OCI-LY7 (cell line): ENCODE measurements at regions of chr16 and their contacts with region 1.

Region 1: DNA sequence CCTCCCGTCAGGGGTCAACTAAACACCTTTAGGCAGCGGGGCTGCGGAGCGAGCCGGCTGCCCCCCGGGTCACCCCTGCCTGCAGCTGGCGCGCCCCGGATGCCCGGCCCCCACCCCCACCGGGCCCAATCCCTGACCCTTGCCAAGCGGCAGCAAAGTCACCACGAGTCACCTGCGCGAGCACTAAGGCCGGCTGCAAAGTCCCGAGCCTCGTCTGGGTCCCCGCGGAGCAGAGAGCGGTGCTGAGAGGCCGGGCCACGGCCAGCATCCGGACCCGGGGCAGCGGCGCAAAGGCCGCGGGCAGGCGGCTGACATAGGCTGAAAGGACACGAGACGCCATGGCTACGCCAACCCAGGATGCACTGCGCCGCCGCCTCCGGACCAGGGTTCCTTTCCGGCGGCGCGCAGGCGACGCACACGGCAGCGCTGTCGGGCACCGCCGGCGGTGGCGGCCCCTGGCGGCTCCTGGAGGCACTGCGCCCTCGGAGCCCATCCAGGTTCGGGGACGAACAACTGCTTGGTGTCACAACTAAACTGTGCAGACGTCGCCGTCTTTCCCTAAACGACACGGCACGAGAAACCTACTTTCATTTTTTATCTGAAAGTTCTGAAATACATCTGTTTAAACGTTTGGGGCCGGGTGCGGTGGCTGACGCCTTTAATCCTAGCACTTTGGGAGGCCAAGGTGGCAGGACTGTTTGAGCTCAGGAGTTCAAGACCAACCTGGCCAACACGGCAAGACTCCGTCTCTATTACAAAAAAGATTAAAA is at the start of gene NDUFAB1:
- DNase-seq: peak; percentile 93
- H3K4me3 ChIP-seq: peak within 1 kb of the TSS; percentile 96
- H3K27ac ChIP-seq: peak within 1 kb of the TSS; percentile 57
- H3K4me1 ChIP-seq: peaks cover 21% of the 10 kb centered on the region
- CTCF ChIP-seq: peak; percentile 82
- total RNA-seq, gene NDUFAB1: 111 and 159 TPM in 2 replicates

Region 2: DNA sequence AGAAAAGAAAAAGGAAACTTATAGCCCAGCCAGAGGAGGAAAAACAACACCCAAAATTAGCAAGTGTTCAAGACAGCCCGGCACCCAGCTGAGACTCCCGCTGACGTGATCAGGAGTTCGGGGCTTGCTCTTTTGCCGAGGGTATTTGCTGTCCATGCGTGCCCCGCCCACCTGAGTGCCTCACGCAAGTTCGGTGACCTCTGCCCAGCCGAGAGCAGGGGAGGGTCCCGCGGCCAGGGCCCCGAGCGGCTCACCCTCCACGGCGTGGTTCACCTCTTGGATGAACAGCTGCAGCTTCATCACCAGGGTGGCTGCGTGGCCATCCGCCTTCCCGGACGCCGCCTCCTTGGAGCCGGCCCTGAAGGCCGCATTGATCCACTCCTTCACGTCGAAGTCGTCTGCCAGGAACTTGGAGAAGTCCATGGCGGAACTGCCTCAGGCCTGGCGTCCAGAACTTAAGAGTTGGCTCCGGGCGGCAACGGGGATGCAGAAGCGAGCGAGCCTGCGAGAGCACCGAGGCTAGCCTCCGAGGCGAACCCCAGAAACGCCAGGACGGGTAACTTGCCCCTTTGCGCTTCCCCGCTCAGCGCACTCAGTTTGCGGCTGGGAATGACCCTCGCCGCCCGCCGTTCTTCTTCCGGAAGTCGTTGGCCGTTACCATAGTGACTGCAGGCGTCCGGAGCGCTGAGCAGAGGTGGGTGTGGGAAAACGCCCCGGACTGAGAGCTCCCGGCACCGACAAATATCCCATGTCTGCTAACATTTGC is 143.4 kb before region 1 on chr16 and contains the start of gene COG7:
- CTCF ChIA-PET with region 1: no interaction called
- POLR2A ChIA-PET with region 1: no interaction called
- intact Hi-C with region 1: loop called (anchors 5 kb)
- DNase-seq: peak; percentile 85
- H3K4me3 ChIP-seq: peak within 1 kb of the TSS; percentile 72
- H3K27ac ChIP-seq: peak within 1 kb of the TSS; percentile 11
- H3K4me1 ChIP-seq: peaks cover 13% of the 10 kb centered on the region
- CTCF ChIP-seq: no peak
- total RNA-seq, gene COG7: 11.1 and 11.4 TPM in 2 replicates

Region 3: GRCh38 chr16:23504451-23505179 is 91.5 kb before region 1 on chr16:
- CTCF ChIA-PET with region 1: no interaction called
- POLR2A ChIA-PET with region 1: interaction called, 4 read pairs
- intact Hi-C with region 1: loop called (anchors 2 kb)
- DNase-seq: peak; percentile 34
- H3K4me3 ChIP-seq: peak overlapping the region; percentile 99
- H3K27ac ChIP-seq: peak overlapping the region; percentile 91
- H3K4me1 ChIP-seq: peaks cover 77% of the 10 kb centered on the region
- CTCF ChIP-seq: peak; percentile 34; the same call in 1 of the 2 replicates

Region 4: GRCh38 chr16:23570992-23571632 is 25.0 kb before region 1 on chr16:
- CTCF ChIA-PET with region 1: no interaction called
- POLR2A ChIA-PET with region 1: interaction called, 7 read pairs
- intact Hi-C with region 1: loop called (anchors 1 kb)
- DNase-seq: peak; percentile 82
- H3K4me3 ChIP-seq: peak overlapping the region; percentile 44
- H3K27ac ChIP-seq: peak overlapping the region; percentile 79
- H3K4me1 ChIP-seq: peaks cover 36% of the 10 kb centered on the region
- CTCF ChIP-seq: no peak

Region 5: DNA sequence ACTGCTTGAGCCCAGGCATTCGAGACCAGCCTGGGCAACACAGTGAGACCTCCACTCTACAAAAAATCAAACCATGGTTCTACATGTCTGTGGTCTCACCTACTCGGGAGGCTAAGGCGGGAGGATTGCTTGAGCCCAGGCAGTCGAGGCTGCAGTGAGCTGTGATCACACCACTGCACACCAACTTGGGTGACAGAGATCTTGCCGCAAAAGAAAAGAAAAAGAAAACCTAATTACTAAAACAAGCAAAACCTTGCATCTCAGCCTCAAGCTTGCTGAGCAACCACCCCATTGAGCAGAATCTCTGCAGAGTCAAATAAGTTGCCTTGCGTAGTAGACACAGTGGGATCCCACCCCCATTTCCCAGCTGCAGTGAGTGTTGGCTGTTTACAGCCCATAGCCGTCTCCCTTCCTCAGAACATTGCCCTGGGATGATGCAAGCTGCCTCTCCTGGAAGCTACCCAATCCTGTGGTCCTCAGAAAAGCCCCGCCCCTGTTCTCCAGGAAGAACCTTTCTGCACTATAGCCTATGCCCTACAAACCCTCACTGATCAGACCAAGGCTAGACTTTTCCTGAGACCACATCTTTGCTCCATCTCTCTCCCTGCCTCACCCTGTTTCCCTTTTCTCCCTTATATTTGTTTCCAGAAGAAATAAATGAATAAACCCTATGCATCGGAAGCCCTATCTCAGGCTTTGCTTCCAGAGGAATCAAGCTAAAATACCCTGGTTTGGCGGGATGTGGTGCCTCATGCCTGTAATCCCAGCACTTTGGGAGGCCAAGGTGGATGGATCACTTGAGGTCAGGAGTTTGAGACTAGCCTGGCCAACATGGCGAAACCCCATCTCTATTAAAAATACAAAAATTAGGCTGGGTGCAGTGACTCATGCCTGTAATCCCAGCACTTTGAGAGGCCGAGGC is 133.6 kb after region 1 on chr16:
- CTCF ChIA-PET with region 1: no interaction called
- POLR2A ChIA-PET with region 1: no interaction called
- intact Hi-C with region 1: no loop called
- DNase-seq: no peak
- H3K4me3 ChIP-seq: no peak overlapping the region
- H3K27ac ChIP-seq: no peak overlapping the region
- H3K4me1 ChIP-seq: no peaks in the 10 kb centered on the region
- CTCF ChIP-seq: no peak